MCF 10A (cell line): ENCODE measurements at regions of chr5 and their contacts with region 1.

Region 1: GRCh38 chr5:180328296-180329137 is 24.6 kb downstream of the GFPT2 start:
- DNase-seq: peak; percentile 97
- H3K4me3 Mint-ChIP-seq: no peak overlapping the region
- H3K27ac Mint-ChIP-seq: no peak overlapping the region
- H3K4me1 Mint-ChIP-seq: peaks cover 40% of the 10 kb centered on the region
- H3K27me3 Mint-ChIP-seq: no peaks in the 10 kb centered on the region
- CTCF ChIP-seq: peak; percentile 93

Region 2: GRCh38 chr5:180284149-180284548 is 44.4 kb before region 1 on chr5:
- CTCF ChIA-PET with region 1: interaction called, 20 read pairs
- POLR2A ChIA-PET with region 1: interaction called, 4 read pairs
- intact Hi-C with region 1: no loop called
- DNase-seq: no peak
- H3K4me3 Mint-ChIP-seq: no peak overlapping the region
- H3K27ac Mint-ChIP-seq: no peak overlapping the region
- H3K4me1 Mint-ChIP-seq: peaks cover 27% of the 10 kb centered on the region
- H3K27me3 Mint-ChIP-seq: no peaks in the 10 kb centered on the region
- CTCF ChIP-seq: no peak

Region 3: GRCh38 chr5:180315762-180316212 is 12.7 kb before region 1 on chr5:
- CTCF ChIA-PET with region 1: interaction called, 96 read pairs
- POLR2A ChIA-PET with region 1: interaction called, 14 read pairs
- intact Hi-C with region 1: no loop called
- DNase-seq: peak; percentile 82
- H3K4me3 Mint-ChIP-seq: no peak overlapping the region
- H3K27ac Mint-ChIP-seq: no peak overlapping the region
- H3K4me1 Mint-ChIP-seq: no peaks in the 10 kb centered on the region
- H3K27me3 Mint-ChIP-seq: no peaks in the 10 kb centered on the region
- CTCF ChIP-seq: peak; percentile 95

Region 4: DNA sequence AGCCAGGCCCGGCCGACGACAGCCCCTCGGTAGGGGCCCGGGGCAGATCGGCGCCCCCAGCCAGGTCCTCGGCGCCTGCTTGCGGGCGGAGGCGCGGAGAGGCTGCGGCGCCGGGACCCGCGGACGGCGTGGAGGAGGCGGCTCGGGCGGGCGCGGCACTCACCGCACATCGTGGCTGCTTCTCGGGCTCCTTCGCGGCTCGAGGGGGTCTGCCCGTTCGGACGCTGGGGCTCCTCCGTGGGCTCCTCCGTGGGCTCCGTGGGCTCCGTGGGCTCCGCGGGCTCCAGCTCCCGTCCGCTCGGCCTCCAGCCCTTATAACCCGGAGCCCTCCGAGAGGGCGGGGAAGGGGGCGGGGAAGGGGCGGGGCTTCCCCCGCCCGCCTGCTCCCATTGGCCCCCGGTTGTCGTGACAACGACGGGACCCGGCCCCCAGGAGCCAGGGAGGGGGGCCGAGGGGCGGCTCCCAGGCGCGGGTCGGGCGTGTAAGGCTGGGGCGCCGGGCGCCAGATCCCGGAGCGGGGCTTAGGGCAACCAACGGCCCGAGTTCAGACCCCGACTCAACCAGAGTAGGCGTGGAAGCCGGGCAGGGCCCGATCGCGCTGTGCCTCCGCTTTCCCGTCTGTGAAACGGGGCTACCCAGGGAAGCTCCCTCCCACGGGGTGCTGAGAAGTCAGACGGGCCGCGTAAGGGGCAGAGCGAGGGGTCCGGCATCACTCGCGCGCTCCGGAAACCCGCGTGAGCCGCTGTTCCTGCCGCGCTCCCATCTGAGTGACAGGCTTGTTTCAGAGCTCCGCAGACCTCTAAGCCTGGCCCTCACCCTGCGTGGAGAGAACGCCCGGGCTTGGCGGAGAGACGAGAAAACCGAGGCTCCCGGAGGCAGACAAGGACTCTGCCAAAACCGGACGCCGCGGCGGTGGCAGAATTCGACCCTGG is 24.8 kb after region 1 on chr5 and contains the start of gene GFPT2:
- CTCF ChIA-PET with region 1: interaction called, 9 read pairs
- POLR2A ChIA-PET with region 1: interaction called, 4 read pairs
- intact Hi-C with region 1: loop called (anchors 1 kb)
- DNase-seq: peak; percentile 89
- H3K4me3 Mint-ChIP-seq: peak within 1 kb of the TSS; percentile 67
- H3K27ac Mint-ChIP-seq: no peak within 1 kb of the TSS
- H3K4me1 Mint-ChIP-seq: no peaks in the 10 kb centered on the region
- H3K27me3 Mint-ChIP-seq: peaks cover 25% of the 10 kb centered on the region
- CTCF ChIP-seq: no peak
- total RNA-seq, gene GFPT2: 8.2 and 15.7 TPM in 2 replicates

Region 5: GRCh38 chr5:180460834-180461233 is 132.3 kb after region 1 on chr5:
- CTCF ChIA-PET with region 1: interaction called, 167 read pairs
- POLR2A ChIA-PET with region 1: interaction called, 3 read pairs
- intact Hi-C with region 1: no loop called
- DNase-seq: no peak
- H3K4me3 Mint-ChIP-seq: no peak overlapping the region
- H3K27ac Mint-ChIP-seq: no peak overlapping the region
- H3K4me1 Mint-ChIP-seq: peaks cover 7% of the 10 kb centered on the region
- H3K27me3 Mint-ChIP-seq: no peaks in the 10 kb centered on the region
- CTCF ChIP-seq: no peak

Region 6: GRCh38 chr5:180790011-180790410 is 461.5 kb after region 1 on chr5:
- CTCF ChIA-PET with region 1: no interaction called
- POLR2A ChIA-PET with region 1: no interaction called
- intact Hi-C with region 1: no loop called
- DNase-seq: no peak
- H3K4me3 Mint-ChIP-seq: no peak overlapping the region
- H3K27ac Mint-ChIP-seq: no peak overlapping the region
- H3K4me1 Mint-ChIP-seq: peaks cover 20% of the 10 kb centered on the region
- H3K27me3 Mint-ChIP-seq: no peaks in the 10 kb centered on the region
- CTCF ChIP-seq: no peak